SK-N-SH (cell line): ENCODE measurements at regions of chr22 and their contacts with region 1.

Region 1: GRCh38 chr22:33519071-33519973 is 401.0 kb downstream of the LARGE1 start:
- DNase-seq: peak; percentile 69
- H3K4me3 ChIP-seq: no peak overlapping the region; a peak in 1 of 4 replicates
- H3K27ac ChIP-seq: no peak overlapping the region
- H3K4me1 ChIP-seq: no peaks in the 10 kb centered on the region
- H3K27me3 ChIP-seq: no peaks in the 10 kb centered on the region
- CTCF ChIP-seq: peak; percentile 53
- EP300 ChIP-seq: no peak
- RAD21 ChIP-seq: peak; percentile 78

Region 2: GRCh38 chr22:33492210-33492651 is 27.1 kb before region 1 on chr22:
- CTCF ChIA-PET with region 1: interaction called, 26 read pairs
- POLR2A ChIA-PET with region 1: no interaction called
- DNase-seq: peak; percentile 30
- H3K4me3 ChIP-seq: no peak overlapping the region
- H3K27ac ChIP-seq: no peak overlapping the region; a peak in 1 of 4 replicates
- H3K4me1 ChIP-seq: peaks cover 0 to 15% of the 10 kb centered on the region in 2 experiments; a peak in 2 of 4 replicates
- H3K27me3 ChIP-seq: no peaks in the 10 kb centered on the region
- CTCF ChIP-seq: no peak
- EP300 ChIP-seq: no peak
- RAD21 ChIP-seq: no peak

Region 3: GRCh38 chr22:33529424-33530113 is 10.2 kb after region 1 on chr22:
- CTCF ChIA-PET with region 1: interaction called, 60 read pairs
- POLR2A ChIA-PET with region 1: no interaction called
- DNase-seq: no peak
- H3K4me3 ChIP-seq: no peak overlapping the region
- H3K27ac ChIP-seq: no peak overlapping the region
- H3K4me1 ChIP-seq: no peaks in the 10 kb centered on the region
- H3K27me3 ChIP-seq: no peaks in the 10 kb centered on the region
- CTCF ChIP-seq: no peak
- EP300 ChIP-seq: no peak
- RAD21 ChIP-seq: no peak

Region 4: DNA sequence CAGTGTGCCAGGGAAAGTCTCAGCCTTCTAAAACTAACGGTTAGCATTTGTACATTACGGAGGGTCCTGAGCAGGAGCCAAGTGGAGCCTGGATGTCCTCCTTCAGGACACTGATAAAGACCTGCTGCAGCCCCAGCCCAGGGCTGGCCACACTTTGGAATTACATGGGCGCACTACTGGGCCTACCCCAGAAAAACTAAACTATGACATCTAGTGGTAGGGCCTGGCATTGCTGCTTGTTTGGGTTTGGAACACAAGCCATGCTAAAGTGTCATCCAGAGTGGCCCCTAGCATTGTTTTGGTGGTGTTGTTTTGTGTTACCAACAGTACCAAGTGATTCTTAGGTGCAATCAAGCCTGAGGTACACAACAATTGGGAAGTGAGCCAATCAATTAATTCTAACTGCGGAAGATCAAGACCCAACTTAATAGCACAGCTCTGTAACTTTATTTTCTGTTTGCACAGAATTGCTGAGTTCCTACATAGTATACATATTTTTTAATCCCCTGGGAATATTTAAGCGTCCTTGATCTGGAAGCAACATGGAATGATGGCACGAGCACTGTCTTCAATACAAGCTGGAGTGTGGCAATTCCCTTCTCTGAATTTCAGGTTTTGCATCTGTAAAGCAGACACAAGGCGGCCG is 60.2 kb after region 1 on chr22:
- CTCF ChIA-PET with region 1: interaction called, 31 read pairs
- POLR2A ChIA-PET with region 1: no interaction called
- DNase-seq: peak; percentile 67
- H3K4me3 ChIP-seq: no peak overlapping the region
- H3K27ac ChIP-seq: no peak overlapping the region
- H3K4me1 ChIP-seq: no peaks in the 10 kb centered on the region
- H3K27me3 ChIP-seq: no peaks in the 10 kb centered on the region
- CTCF ChIP-seq: peak; percentile 55
- EP300 ChIP-seq: no peak
- RAD21 ChIP-seq: peak; percentile 83

Region 5: GRCh38 chr22:33920927-33921524 is 401.7 kb after region 1 on chr22:
- CTCF ChIA-PET with region 1: interaction called, 19 read pairs
- POLR2A ChIA-PET with region 1: no interaction called
- DNase-seq: peak; percentile 96
- H3K4me3 ChIP-seq: peak overlapping the region; percentile 54 to 82
- H3K27ac ChIP-seq: peak overlapping the region in 1 of 2 experiments; percentile 28; a peak in 1 of 4 replicates
- H3K4me1 ChIP-seq: peaks cover 0 to 21% of the 10 kb centered on the region in 2 experiments; a peak in 2 of 4 replicates
- H3K27me3 ChIP-seq: no peaks in the 10 kb centered on the region; the same call in 1 of the 2 replicates
- CTCF ChIP-seq: no peak
- EP300 ChIP-seq: no peak
- RAD21 ChIP-seq: no peak

Region 6: GRCh38 chr22:34111210-34111824 is 592.0 kb after region 1 on chr22:
- CTCF ChIA-PET with region 1: interaction called, 17 read pairs
- POLR2A ChIA-PET with region 1: no interaction called
- DNase-seq: peak; percentile 48
- H3K4me3 ChIP-seq: no peak overlapping the region; a peak in 1 of 4 replicates
- H3K27ac ChIP-seq: no peak overlapping the region
- H3K4me1 ChIP-seq: no peaks in the 10 kb centered on the region
- H3K27me3 ChIP-seq: no peaks in the 10 kb centered on the region
- CTCF ChIP-seq: peak; percentile 53
- EP300 ChIP-seq: no peak
- RAD21 ChIP-seq: peak; percentile 53